CD4-positive, alpha-beta T cell (primary cell): ENCODE measurements at regions of chr12 and their contacts with region 1.

Region 1: GRCh38 chr12:57751788-57752667 is at the start of gene CDK4:
- DNase-seq: peak; percentile 97 to 100 (median 98)
- ATAC-seq: peak; percentile 75
- H3K4me3 ChIP-seq: peak within 1 kb of the TSS; percentile 66
- H3K4me3 Mint-ChIP-seq: peak within 1 kb of the TSS; percentile 89
- H3K27ac ChIP-seq: peak within 1 kb of the TSS; percentile 74 to 86
- H3K27ac Mint-ChIP-seq: peak within 1 kb of the TSS; percentile 87
- H3K4me1 ChIP-seq: peaks cover 54% of the 10 kb centered on the region
- H3K4me1 Mint-ChIP-seq: peaks cover 62% of the 10 kb centered on the region
- H3K27me3 ChIP-seq: no peaks in the 10 kb centered on the region
- H3K27me3 Mint-ChIP-seq: no peaks in the 10 kb centered on the region
- CTCF ChIP-seq: no peak
- total RNA-seq, gene CDK4: 8.7 to 10.8 TPM

Region 2: DNA sequence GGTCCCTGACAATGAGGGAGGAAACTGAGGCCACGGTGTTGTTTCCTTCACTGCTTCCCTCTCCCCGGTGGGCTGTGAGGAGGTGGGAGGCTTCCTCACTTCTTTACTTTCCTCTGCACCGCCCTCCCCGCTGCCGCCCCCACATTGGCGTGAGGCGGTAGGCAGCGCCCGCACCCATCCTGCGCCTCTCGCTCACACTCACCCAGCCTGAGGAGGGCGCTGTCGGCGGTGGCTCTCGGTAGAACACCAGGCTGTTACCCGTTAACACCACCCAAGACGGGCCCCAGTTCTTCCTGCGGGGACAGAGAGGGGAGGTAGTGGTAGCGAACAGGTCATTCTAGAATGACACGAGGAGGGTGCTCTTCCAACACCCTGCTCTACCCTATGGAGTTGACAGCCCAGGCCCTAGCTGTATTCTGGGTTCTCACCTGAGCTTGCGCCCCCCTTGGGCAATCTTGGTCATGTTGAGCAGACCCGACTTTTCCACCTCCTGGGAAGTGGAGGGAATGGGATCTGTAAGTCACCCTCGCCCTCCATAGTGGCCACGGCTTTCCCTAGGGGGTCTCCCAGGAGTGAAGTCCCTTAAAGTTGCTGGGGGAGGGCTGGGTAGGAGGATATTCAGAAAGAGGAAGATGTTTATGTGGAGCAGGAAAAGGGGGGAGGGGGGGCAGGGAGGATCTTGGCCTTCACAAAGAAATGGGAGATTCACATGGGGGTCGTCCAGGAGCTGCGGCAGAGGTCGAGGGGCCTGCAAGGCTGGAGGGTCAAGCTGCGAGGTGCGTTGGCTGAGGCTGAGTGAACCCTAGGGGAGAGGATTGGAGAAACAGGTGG is 275.7 kb before region 1 on chr12:
- CTCF ChIA-PET with region 1: no interaction called
- POLR2A ChIA-PET with region 1: no interaction called
- intact Hi-C with region 1: loop called in 1 of 2 experiments (anchors 5 kb)
- DNase-seq: peak; percentile 52 to 84 (median 64)
- ATAC-seq: peak; percentile 31
- H3K4me3 ChIP-seq: peak overlapping the region; percentile 90
- H3K4me3 Mint-ChIP-seq: peak overlapping the region; percentile 93
- H3K27ac ChIP-seq: peak overlapping the region; percentile 99
- H3K27ac Mint-ChIP-seq: peak overlapping the region; percentile 99
- H3K4me1 ChIP-seq: peaks cover 84% of the 10 kb centered on the region
- H3K4me1 Mint-ChIP-seq: peaks cover 89% of the 10 kb centered on the region
- H3K27me3 ChIP-seq: no peaks in the 10 kb centered on the region
- H3K27me3 Mint-ChIP-seq: no peaks in the 10 kb centered on the region
- CTCF ChIP-seq: peak; percentile 63

Region 3: GRCh38 chr12:57666897-57667296 is 85.1 kb before region 1 on chr12:
- CTCF ChIA-PET with region 1: no interaction called
- POLR2A ChIA-PET with region 1: no interaction called
- intact Hi-C with region 1: no loop called
- DNase-seq: no peak
- ATAC-seq: no peak
- H3K4me3 ChIP-seq: no peak overlapping the region
- H3K4me3 Mint-ChIP-seq: no peak overlapping the region
- H3K27ac ChIP-seq: no peak overlapping the region
- H3K27ac Mint-ChIP-seq: no peak overlapping the region
- H3K4me1 ChIP-seq: no peaks in the 10 kb centered on the region
- H3K4me1 Mint-ChIP-seq: no peaks in the 10 kb centered on the region
- H3K27me3 ChIP-seq: no peaks in the 10 kb centered on the region
- H3K27me3 Mint-ChIP-seq: peaks cover 15% of the 10 kb centered on the region
- CTCF ChIP-seq: no peak

Region 4: GRCh38 chr12:57765042-57765697 is 13.1 kb after region 1 on chr12:
- CTCF ChIA-PET with region 1: interaction called, 18 read pairs
- POLR2A ChIA-PET with region 1: interaction called, 14 read pairs
- intact Hi-C with region 1: loop called in 1 of 2 experiments (anchors 1 kb)
- DNase-seq: peak in 12 of 14 experiments; percentile 38 to 74 (median 54)
- ATAC-seq: peak; percentile 71
- H3K4me3 ChIP-seq: peak overlapping the region; percentile 60
- H3K4me3 Mint-ChIP-seq: peak overlapping the region; percentile 86
- H3K27ac ChIP-seq: no peak overlapping the region
- H3K27ac Mint-ChIP-seq: no peak overlapping the region
- H3K4me1 ChIP-seq: peaks cover 30% of the 10 kb centered on the region
- H3K4me1 Mint-ChIP-seq: peaks cover 38% of the 10 kb centered on the region
- H3K27me3 ChIP-seq: peaks cover 27 to 31% of the 10 kb centered on the region in 2 experiments
- H3K27me3 Mint-ChIP-seq: peaks cover 35% of the 10 kb centered on the region
- CTCF ChIP-seq: peak; percentile 59

Region 5: DNA sequence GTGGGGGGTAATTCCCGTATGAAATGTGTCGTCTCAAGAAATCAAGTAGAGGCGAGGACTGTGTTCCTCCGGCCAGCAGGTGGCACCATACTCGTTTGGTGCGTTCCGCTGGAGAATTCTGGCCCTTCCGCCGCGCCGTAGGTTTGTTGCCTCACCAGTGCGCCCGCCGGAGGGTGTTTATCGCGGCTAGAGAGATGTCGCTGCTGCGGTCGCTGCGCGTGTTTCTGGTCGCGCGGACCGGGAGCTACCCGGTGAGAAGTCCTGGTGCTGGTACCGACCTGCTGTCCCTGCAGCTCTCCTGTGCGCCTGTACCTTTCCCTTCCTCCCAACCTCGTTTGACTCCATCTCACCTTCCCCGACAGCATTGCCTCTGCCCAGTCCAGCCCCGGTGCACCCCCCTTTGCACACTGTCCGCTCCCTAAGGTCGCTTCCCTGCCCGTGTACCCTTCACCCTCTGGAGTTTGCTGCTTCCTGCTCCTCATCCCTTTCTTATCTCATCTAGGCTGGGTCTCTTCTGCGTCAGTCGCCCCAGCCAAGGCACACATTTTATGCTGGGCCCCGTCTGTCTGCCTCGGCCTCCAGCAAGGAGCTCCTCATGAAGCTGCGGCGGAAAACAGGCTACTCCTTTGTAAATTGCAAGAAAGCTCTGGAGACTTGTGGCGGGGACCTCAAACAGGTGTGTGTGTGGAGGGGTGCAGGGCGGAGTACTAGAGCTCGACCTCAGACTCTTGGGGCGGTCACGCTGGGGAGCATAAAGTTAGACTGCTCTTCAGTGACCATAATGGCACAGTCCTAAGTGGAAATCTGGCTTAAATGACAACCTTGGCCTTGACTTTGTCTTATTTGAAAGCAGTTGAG is 30.8 kb after region 1 on chr12 and contains the start of gene TSFM:
- CTCF ChIA-PET with region 1: interaction called, 20 read pairs
- POLR2A ChIA-PET with region 1: interaction called, 10 read pairs
- intact Hi-C with region 1: loop called (anchors 1 kb)
- DNase-seq: peak; percentile 93 to 99 (median 98)
- ATAC-seq: peak; percentile 93
- H3K4me3 ChIP-seq: peak within 1 kb of the TSS; percentile 89
- H3K4me3 Mint-ChIP-seq: peak within 1 kb of the TSS; percentile 100
- H3K27ac ChIP-seq: peak within 1 kb of the TSS; percentile 51 to 78
- H3K27ac Mint-ChIP-seq: peak within 1 kb of the TSS; percentile 100
- H3K4me1 ChIP-seq: peaks cover 58% of the 10 kb centered on the region
- H3K4me1 Mint-ChIP-seq: peaks cover 47% of the 10 kb centered on the region
- H3K27me3 ChIP-seq: no peaks in the 10 kb centered on the region
- H3K27me3 Mint-ChIP-seq: no peaks in the 10 kb centered on the region
- CTCF ChIP-seq: peak; percentile 90
- total RNA-seq, gene TSFM: 25.8 to 26.9 TPM

Region 6: GRCh38 chr12:57846577-57847319 is 94.7 kb after region 1 on chr12 and contains the start of gene CTDSP2:
- CTCF ChIA-PET with region 1: no interaction called
- POLR2A ChIA-PET with region 1: interaction called, 7 read pairs
- intact Hi-C with region 1: loop called in 1 of 2 experiments (anchors 5 kb)
- DNase-seq: peak; percentile 66 to 98 (median 88)
- ATAC-seq: peak; percentile 28
- H3K4me3 ChIP-seq: peak within 1 kb of the TSS; percentile 86
- H3K4me3 Mint-ChIP-seq: peak within 1 kb of the TSS; percentile 87
- H3K27ac ChIP-seq: peak within 1 kb of the TSS; percentile 57 to 91
- H3K27ac Mint-ChIP-seq: peak within 1 kb of the TSS; percentile 92
- H3K4me1 ChIP-seq: peaks cover 47% of the 10 kb centered on the region
- H3K4me1 Mint-ChIP-seq: peaks cover 53% of the 10 kb centered on the region
- H3K27me3 ChIP-seq: no peaks in the 10 kb centered on the region
- H3K27me3 Mint-ChIP-seq: peaks cover 5% of the 10 kb centered on the region
- CTCF ChIP-seq: no peak
- total RNA-seq, gene CTDSP2: 86.2 to 86.4 TPM

Region 7: GRCh38 chr12:58211211-58211610 is 459.2 kb after region 1 on chr12:
- CTCF ChIA-PET with region 1: no interaction called
- POLR2A ChIA-PET with region 1: no interaction called
- intact Hi-C with region 1: no loop called
- DNase-seq: no peak
- ATAC-seq: no peak
- H3K4me3 ChIP-seq: no peak overlapping the region
- H3K4me3 Mint-ChIP-seq: no peak overlapping the region
- H3K27ac ChIP-seq: no peak overlapping the region
- H3K27ac Mint-ChIP-seq: no peak overlapping the region
- H3K4me1 ChIP-seq: no peaks in the 10 kb centered on the region
- H3K4me1 Mint-ChIP-seq: no peaks in the 10 kb centered on the region
- H3K27me3 ChIP-seq: no peaks in the 10 kb centered on the region
- H3K27me3 Mint-ChIP-seq: peaks cover 17% of the 10 kb centered on the region
- CTCF ChIP-seq: no peak